ENCODE measurements at regions of chr6 and their contacts with region 1.

Region 1: GRCh38 chr6:46221222-46221793 is 50.5 kb upstream of the ENPP5 start:
- DNase-seq: no peak
- H3K4me3 ChIP-seq: no peak overlapping the region
- H3K27ac ChIP-seq: no peak overlapping the region
- H3K4me1 ChIP-seq: no peaks in the 10 kb centered on the region
- H3K27me3 ChIP-seq: peaks cover 4% of the 10 kb centered on the region; the same call in 1 of the 2 replicates
- CTCF ChIP-seq: peak; percentile 77

Region 2: DNA sequence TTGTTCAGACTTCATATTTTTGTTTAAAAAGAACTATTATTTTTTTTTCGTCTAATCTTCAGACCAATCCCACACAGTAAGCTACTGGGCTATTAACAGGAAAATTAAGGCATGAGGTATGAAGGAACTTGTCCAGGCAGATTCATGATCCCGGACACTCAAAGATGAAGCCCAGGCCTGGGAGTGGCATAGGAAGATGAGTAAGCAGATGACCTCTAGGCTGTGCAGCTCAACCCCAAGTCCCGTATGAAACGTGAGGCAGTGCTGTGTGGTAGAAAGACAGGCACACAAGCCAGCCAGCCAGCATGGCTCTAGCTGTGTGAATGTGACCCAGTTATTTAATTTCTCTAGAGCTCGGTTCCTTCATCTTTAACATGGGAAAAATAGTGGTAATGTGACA is 437.6 kb before region 1 on chr6:
- CTCF ChIA-PET with region 1: no interaction called
- POLR2A ChIA-PET with region 1: no interaction called
- intact Hi-C with region 1: no loop called
- DNase-seq: no peak
- H3K4me3 ChIP-seq: no peak overlapping the region
- H3K27ac ChIP-seq: no peak overlapping the region
- H3K4me1 ChIP-seq: no peaks in the 10 kb centered on the region
- H3K27me3 ChIP-seq: no peaks in the 10 kb centered on the region
- CTCF ChIP-seq: no peak

Region 3: GRCh38 chr6:46269447-46270229 is 48.3 kb after region 1 on chr6:
- CTCF ChIA-PET with region 1: no interaction called
- POLR2A ChIA-PET with region 1: no interaction called
- intact Hi-C with region 1: no loop called
- DNase-seq: no peak
- H3K4me3 ChIP-seq: no peak overlapping the region
- H3K27ac ChIP-seq: no peak overlapping the region
- H3K4me1 ChIP-seq: no peaks in the 10 kb centered on the region
- H3K27me3 ChIP-seq: no peaks in the 10 kb centered on the region
- CTCF ChIP-seq: no peak

Region 4: GRCh38 chr6:46410334-46410953 is 189.1 kb after region 1 on chr6:
- CTCF ChIA-PET with region 1: interaction called, 3 read pairs
- POLR2A ChIA-PET with region 1: no interaction called
- intact Hi-C with region 1: loop called (anchors 1 kb)
- DNase-seq: peak in 1 of 2 experiments; percentile 23
- H3K4me3 ChIP-seq: no peak overlapping the region
- H3K27ac ChIP-seq: no peak overlapping the region
- H3K4me1 ChIP-seq: no peaks in the 10 kb centered on the region
- H3K27me3 ChIP-seq: no peaks in the 10 kb centered on the region
- CTCF ChIP-seq: peak; percentile 91

Region 5: DNA sequence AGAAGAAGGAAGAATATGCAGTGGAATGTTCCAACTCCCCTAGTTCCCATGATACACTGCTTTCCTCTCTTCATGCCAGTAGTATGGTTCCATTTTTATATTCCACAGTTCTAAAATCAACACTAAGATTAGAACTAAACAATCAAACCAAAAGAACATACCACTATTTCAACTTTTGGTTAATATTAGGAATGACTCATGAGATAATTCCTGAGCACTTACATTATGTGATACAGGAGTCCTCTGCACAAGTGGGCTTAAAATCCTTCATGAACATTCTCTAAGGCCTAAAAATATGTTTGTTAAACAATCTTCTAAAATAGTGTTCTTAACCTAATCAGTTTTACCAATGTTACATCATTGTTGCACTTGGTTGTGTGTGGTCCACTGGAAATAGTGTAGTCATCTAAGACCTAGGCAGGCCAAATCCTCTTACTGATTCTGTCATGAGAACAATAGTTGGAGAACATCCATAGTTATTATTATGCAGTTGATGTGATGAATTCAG is 300.2 kb after region 1 on chr6:
- CTCF ChIA-PET with region 1: interaction called, 11 read pairs
- POLR2A ChIA-PET with region 1: no interaction called
- intact Hi-C with region 1: no loop called
- DNase-seq: no peak
- H3K4me3 ChIP-seq: no peak overlapping the region
- H3K27ac ChIP-seq: no peak overlapping the region
- H3K4me1 ChIP-seq: no peaks in the 10 kb centered on the region
- H3K27me3 ChIP-seq: no peaks in the 10 kb centered on the region
- CTCF ChIP-seq: no peak